A673 (cell line): ENCODE measurements at regions of chr1 and their contacts with region 1.

Region 1: DNA sequence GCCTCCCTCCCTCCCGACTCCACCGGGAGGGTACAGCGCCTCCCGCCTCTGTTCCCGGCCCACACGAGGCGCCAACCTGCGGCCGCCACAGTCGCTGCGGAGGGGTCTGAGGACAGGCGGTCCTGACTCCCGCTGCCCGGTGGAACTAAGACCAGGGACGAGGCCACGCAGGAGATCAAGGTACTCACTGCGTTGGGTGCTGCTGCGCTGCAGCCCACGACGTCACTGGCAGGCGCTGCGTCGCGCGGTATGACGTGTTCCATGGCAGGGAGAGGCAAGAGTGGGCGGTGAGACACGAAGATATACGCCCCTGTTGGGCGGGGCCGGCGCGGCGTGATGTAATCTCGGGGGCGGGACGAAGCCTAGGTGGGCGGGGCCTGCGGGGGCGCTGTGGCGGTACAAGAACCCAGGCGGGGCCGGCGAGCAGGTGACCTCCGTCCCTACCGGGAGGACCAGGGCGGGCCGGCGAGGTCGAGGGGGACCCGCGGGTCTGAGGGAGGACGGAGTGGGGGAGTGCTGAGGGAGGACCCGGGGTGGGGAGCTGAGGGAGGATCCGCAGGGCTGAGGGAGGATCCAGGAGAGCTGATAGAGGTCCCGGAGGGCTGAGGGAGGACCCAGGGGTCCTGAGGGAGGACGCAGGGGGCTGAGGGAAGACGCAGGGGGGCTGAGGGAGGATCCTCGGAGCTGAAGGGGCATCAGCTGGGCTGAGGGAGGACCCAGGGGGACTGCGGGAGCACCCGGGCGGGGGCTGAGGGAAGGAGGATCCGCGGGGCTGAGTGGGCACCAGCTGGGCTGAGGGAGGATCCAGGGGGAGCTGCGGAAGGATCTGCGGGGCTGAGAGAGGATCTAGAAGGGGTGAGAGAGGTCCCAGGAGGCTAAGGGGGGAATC is at the start of gene MRPL55:
- DNase-seq: peak; percentile 97
- H3K4me3 ChIP-seq: peak within 1 kb of the TSS; percentile 87
- H3K27ac ChIP-seq: peak within 1 kb of the TSS; percentile 84
- H3K4me1 ChIP-seq: peaks cover 5% of the 10 kb centered on the region
- H3K27me3 ChIP-seq: no peaks in the 10 kb centered on the region
- CTCF ChIP-seq: peak; percentile 40; the same call in 1 of the 2 replicates
- total RNA-seq, gene MRPL55: 60.4 and 70.8 TPM in 2 replicates

Region 2: GRCh38 chr1:228139944-228140656 is 30.8 kb after region 1 on chr1 and contains the start of gene GUK1:
- CTCF ChIA-PET with region 1: no interaction called
- POLR2A ChIA-PET with region 1: no interaction called
- intact Hi-C with region 1: loop called (anchors 1 kb)
- DNase-seq: peak; percentile 99
- H3K4me3 ChIP-seq: peak within 1 kb of the TSS; percentile 87
- H3K27ac ChIP-seq: peak within 1 kb of the TSS; percentile 92
- H3K4me1 ChIP-seq: peaks cover 18% of the 10 kb centered on the region
- H3K27me3 ChIP-seq: peaks cover 14% of the 10 kb centered on the region
- CTCF ChIP-seq: no peak; the same call in 1 of the 2 replicates
- total RNA-seq, gene GUK1: 128 and 130 TPM in 2 replicates

Region 3: GRCh38 chr1:228249513-228250305 is 140.4 kb after region 1 on chr1:
- CTCF ChIA-PET with region 1: no interaction called
- POLR2A ChIA-PET with region 1: no interaction called
- intact Hi-C with region 1: no loop called
- DNase-seq: no peak
- H3K4me3 ChIP-seq: no peak overlapping the region
- H3K27ac ChIP-seq: no peak overlapping the region
- H3K4me1 ChIP-seq: no peaks in the 10 kb centered on the region
- H3K27me3 ChIP-seq: no peaks in the 10 kb centered on the region
- CTCF ChIP-seq: no peak